ENCODE measurements at regions of chr11 and their contacts with region 1.

Region 1: GRCh38 chr11:117226388-117227385 is 5.2 kb downstream of the PCSK7 start:
- DNase-seq: peak in 2 of 5 donors; percentile 50 to 58
- ATAC-seq: peak in 3 of 4 donors; percentile 75 to 80 (median 76)
- H3K4me3 ChIP-seq: no peak overlapping the region
- H3K27ac ChIP-seq: peak overlapping the region in 1 of 12 donors; percentile 13
- H3K4me1 ChIP-seq: peaks cover under 1 to 39% (median 21%) of the 10 kb centered on the region in 12 donors
- H3K27me3 ChIP-seq: no peaks in the 10 kb centered on the region
- CTCF ChIP-seq: peak; percentile 64 to 88 (median 82)
- POLR2A ChIP-seq: no peak

Region 2: GRCh38 chr11:116787786-116788486 is 438.8 kb before region 1 on chr11 and contains the start of gene ZPR1:
- intact Hi-C with region 1: loop called (anchors 2 to 10 kb)
- DNase-seq: peak; percentile 85 to 92 (median 88)
- ATAC-seq: peak; percentile 80 to 90 (median 88)
- H3K4me3 ChIP-seq: peak within 1 kb of the TSS; percentile 74 to 99 (median 96)
- H3K27ac ChIP-seq: peak within 1 kb of the TSS; percentile 61 to 93 (median 84)
- H3K4me1 ChIP-seq: peaks cover 0 to 31% (median 16%) of the 10 kb centered on the region in 12 donors
- H3K27me3 ChIP-seq: no peaks in the 10 kb centered on the region
- CTCF ChIP-seq: no peak
- POLR2A ChIP-seq: peak in 1 of 2 donors; percentile 66
- total RNA-seq, gene ZPR1: 9.7 to 48.7 (median 27.1) TPM

Region 3: GRCh38 chr11:116861539-116861938 is 365.1 kb before region 1 on chr11:
- intact Hi-C with region 1: loop called in 1 of 10 experiments (anchors 10 kb)
- DNase-seq: no peak
- ATAC-seq: no peak
- H3K4me3 ChIP-seq: no peak overlapping the region
- H3K27ac ChIP-seq: no peak overlapping the region
- H3K4me1 ChIP-seq: peaks cover 0 to 23% (median 9%) of the 10 kb centered on the region in 12 donors
- H3K27me3 ChIP-seq: no peaks in the 10 kb centered on the region
- CTCF ChIP-seq: no peak
- POLR2A ChIP-seq: no peak

Region 4: DNA sequence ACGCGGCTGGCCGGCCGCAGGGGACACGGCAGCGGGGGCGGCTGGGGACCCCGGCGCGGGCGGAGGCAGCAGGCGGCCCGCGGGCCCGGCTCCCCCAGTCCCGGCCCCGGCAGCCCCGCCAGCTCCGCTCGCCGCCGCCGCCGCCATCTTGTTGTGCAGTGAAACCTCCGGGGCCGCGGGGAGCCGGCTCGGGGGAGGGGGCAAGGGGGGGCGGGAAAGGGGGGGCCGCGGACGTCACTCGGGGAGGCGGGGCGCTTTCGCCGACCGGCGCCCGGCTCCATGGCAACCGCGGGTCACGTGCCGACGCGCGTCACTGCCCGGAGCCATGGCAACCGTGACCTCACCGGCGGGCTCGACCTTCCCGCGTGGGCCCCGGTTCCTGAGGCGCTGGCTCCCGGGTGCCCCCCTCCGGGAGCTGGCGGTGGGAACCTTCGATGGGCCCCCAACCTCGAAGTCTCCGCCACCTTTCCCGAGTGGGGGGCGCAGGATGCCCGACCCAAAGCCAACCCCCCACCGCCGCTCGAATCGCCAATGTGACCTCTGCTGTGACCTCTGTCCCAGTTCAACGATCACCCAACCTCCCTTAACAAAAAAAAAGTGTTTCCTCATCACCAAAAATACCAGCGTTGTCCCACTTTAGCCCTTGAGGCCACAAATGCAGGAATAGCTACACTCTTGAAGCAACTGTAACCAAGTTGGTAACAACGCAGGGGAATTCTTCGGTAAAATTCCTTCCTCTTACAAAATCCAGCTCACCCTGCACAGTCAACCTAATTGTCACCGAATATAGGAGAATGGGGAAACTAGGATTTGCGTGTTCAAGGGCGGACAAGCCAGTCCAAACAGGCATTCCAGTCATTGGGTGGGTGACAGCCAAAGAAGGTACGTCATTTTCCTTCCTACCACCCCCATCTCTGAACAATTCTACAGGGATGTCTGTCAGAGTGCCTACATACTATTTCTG is 128.1 kb before region 1 on chr11 and contains the start of gene SIK3:
- intact Hi-C with region 1: loop called in 3 of 10 experiments (anchors 5 to 10 kb)
- DNase-seq: peak; percentile 95 to 98 (median 97)
- ATAC-seq: peak; percentile 86 to 94 (median 92)
- H3K4me3 ChIP-seq: peak within 1 kb of the TSS; percentile 57 to 94 (median 84)
- H3K27ac ChIP-seq: peak within 1 kb of the TSS; percentile 95 to 99 (median 98)
- H3K4me1 ChIP-seq: peaks cover 0 to 53% (median 44%) of the 10 kb centered on the region in 12 donors
- H3K27me3 ChIP-seq: no peaks in the 10 kb centered on the region
- CTCF ChIP-seq: peak in 11 of 12 donors; percentile 24 to 74 (median 53)
- POLR2A ChIP-seq: peak in 1 of 2 donors; percentile 82
- total RNA-seq, gene SIK3: 25.7 to 67.4 (median 39.0) TPM

Region 5: DNA sequence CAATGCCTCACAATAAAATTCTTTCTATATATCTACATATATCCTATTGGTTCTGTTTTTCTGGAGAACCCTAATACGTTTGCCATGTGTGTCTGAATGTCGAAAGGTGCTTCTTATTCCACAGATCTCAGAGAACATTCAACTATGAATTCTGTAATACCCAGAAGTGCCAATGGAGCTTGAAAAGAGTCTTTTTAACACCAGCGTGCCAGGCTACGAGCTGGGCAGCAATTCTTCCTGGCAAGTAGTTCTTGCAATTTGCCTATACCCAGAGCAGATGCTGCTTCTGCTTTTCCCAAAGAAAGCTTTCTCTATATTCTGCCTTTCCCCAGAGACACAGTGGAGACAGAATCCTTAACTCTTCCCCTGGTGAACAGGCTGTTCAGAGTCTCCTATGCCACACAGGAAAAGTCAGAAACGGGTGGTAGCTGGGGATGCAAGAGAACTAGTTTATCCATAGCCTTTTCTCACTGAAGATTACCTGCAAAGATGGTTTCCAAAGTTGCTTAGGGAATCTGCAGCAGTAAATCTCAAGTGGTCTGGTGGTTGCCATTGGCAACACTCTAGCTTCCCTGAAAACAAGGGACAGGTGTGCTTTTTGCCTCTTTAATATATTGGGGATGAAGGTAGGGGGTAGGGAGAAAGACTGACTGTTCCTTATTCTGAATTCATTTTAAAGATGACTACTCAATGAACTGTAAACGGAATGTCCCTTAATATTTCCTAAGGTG is 99.4 kb before region 1 on chr11:
- intact Hi-C with region 1: loop called in 1 of 10 experiments (anchors 5 kb)
- DNase-seq: no peak
- ATAC-seq: no peak
- H3K4me3 ChIP-seq: no peak overlapping the region
- H3K27ac ChIP-seq: no peak overlapping the region
- H3K4me1 ChIP-seq: no peaks in the 10 kb centered on the region
- H3K27me3 ChIP-seq: no peaks in the 10 kb centered on the region
- CTCF ChIP-seq: no peak
- POLR2A ChIP-seq: no peak

Region 6: DNA sequence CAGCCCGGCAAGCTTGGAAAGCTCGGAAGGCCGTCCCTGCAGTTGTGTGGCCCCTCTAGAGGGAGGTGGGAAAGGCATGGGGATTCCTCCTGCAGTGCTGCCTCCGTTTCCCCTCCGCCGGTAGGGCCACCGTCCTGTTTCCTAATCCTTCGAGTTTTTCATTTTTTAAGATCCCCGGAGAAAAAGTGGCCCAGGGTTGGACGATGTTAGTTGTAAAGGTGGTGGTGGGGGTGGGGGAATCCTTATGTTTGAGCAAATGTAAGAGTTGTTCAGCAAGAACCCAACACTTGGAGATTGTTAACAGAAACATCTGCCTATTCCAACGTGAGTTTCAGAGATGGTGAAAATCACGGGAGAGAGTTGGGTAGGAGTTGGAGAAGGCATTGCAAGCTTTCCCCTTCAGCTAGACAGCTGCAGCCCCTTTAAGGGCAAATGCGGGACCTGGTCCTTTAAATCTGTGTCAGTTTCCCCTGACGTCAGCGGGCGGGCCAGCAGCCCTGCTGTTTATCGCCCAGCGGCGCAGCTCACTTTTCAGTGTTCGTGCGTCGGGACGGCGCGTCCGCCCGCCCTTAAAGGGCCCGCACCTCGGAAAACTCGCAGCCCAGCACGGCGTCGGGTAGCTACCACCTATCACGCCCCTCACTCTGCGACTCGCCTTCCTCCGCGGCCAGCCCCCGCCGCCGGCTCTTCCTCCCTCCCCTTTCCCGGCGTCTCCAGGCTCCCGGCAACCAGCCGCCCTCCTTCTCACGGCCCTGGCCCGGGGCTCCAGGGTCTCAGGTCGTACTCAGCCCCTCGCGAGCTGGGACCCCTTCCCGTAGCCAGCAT is 48.3 kb before region 1 on chr11 and contains the start of gene SIDT2:
- intact Hi-C with region 1: loop called in 9 of 10 experiments (anchors 1 to 5 kb)
- DNase-seq: peak; percentile 96 to 98 (median 96)
- ATAC-seq: peak; percentile 93 to 96 (median 96)
- H3K4me3 ChIP-seq: peak within 1 kb of the TSS; percentile 75 to 96 (median 91)
- H3K27ac ChIP-seq: peak within 1 kb of the TSS; percentile 77 to 98 (median 96)
- H3K4me1 ChIP-seq: peaks cover 0 to 43% (median 33%) of the 10 kb centered on the region in 12 donors
- H3K27me3 ChIP-seq: no peaks in the 10 kb centered on the region
- CTCF ChIP-seq: no peak
- POLR2A ChIP-seq: peak; percentile 90 to 96
- total RNA-seq, gene SIDT2: 17.2 to 45.5 (median 22.2) TPM

Measured in heart left ventricle (tissue), 16 donors.